Panc1 (cell line): ENCODE measurements at regions of chr12 and their contacts with region 1.

Region 1: DNA sequence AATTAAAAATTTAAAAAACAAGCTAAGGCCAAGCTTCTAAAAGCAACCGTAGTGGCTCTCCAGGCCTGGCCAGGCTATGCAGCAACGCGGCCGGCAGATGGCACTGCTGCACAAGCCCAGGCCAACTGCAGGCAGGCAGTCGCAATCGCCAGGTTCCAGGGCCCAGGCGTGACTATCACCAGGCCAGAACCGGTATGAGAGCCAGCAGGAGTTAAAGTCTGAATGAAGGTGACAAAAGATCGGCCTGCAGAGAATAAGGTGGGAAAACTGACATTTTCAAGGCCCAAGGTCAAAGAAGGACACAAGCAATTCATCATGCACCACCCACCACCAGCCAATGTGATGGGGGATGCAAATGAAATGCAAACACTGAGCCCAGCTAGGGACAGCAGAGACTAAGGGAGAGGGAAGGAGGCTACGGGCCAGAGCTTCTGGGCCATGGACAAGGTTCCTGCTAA is 43.6 kb upstream of the ANO2 start:
- DNase-seq: peak; percentile 42
- ATAC-seq: peak; percentile 97
- H3K4me3 ChIP-seq: no peak overlapping the region
- H3K27ac ChIP-seq: no peak overlapping the region
- H3K4me1 ChIP-seq: no peaks in the 10 kb centered on the region
- H3K27me3 ChIP-seq: no peaks in the 10 kb centered on the region; the same call in 1 of the 2 replicates
- CTCF ChIP-seq: peak; percentile 95

Region 2: DNA sequence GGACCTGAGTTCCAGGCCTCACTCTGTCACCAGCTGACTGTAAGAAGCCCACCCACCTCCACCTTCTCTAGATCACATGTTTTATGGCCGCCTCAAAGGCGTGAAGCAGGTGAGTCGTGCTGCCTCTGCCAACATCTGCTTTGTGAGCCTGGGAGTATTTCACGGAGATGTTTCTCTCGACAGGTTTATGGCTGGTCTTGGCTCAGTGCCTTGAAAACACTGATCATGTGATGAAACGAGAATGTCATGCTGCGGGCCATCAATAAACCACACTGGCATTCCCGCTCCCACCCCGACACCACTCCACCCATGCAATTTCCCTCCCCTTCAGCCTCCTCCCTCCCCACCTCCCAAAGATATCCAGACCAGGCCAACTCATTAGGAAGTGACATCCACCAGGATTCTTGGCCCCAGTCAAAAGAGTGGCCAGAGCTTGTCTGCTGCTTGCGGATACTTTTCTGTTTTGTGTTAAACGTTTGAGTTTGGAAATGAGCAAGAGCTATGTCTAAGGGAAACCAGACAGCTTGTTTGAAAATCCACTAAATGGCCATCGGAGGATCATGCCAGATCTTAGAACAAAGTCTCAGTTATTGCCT is 610.6 kb before region 1 on chr12:
- CTCF ChIA-PET with region 1: no interaction called
- POLR2A ChIA-PET with region 1: interaction called, 11 read pairs
- in situ Hi-C with region 1: no loop called
- intact Hi-C with region 1: no loop called
- DNase-seq: no peak
- ATAC-seq: no peak
- H3K4me3 ChIP-seq: no peak overlapping the region
- H3K27ac ChIP-seq: no peak overlapping the region
- H3K4me1 ChIP-seq: no peaks in the 10 kb centered on the region
- H3K27me3 ChIP-seq: no peaks in the 10 kb centered on the region
- CTCF ChIP-seq: no peak

Region 3: DNA sequence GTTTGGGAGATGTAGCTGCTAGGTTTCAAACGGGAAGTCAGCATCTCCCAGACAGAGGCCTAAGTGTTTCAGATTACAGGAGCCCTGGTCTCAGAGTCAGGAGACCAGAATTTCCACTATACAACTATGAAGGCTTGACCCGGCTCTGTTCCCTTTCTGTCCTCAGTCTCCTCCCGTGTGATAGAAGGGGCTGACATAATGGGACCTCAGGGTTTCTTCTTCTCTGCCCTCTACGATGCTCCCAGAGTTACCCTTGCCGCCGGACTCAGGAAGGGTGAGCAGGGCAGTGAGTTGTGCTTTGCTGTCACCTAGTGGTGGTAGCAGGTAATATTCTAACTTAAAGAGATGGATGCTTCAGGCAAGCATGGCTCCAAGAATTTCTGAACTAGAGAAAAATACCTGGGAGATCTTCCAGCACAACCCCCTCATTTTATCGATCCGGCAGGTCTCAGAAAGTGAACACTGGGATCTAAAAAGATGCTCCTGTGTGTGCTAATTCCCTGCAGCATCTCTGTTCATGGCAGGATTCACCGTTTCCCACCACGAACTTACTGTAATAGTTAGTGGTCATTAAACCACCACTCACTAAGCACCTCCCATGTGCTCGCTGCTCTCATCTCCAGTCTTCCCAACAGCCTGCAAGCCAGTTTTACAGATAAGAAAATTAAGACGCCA is 51.3 kb after region 1 on chr12:
- CTCF ChIA-PET with region 1: interaction called, 34 read pairs
- POLR2A ChIA-PET with region 1: no interaction called
- in situ Hi-C with region 1: no loop called
- intact Hi-C with region 1: loop called (anchors 1 kb)
- DNase-seq: peak; percentile 55
- ATAC-seq: peak; percentile 90
- H3K4me3 ChIP-seq: no peak overlapping the region
- H3K27ac ChIP-seq: no peak overlapping the region
- H3K4me1 ChIP-seq: no peaks in the 10 kb centered on the region
- H3K27me3 ChIP-seq: no peaks in the 10 kb centered on the region
- CTCF ChIP-seq: peak; percentile 88

Region 4: DNA sequence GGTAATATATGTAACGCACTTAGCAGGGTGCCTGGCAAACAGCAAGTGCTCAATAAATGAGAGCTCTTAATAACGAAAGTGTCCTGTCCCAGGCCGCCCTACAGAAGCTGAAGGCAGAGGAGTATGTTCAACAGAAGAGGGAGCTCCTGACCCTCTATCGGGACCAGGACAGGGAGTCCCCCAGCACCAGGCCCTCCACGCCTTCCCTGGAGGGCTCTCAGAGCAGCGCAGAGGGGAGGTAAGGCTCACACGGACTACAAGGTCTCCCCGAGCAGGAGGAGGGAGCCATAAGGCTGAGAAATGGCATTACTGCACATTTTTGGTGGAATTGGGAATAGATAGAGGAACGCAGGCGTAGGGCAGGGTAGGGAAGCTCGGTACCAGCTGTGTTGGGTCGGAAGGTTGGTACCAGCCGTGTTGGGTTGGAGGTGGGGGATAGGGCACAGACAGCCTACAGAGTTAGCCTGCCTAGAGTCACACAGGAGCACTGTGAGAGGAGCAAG is 337.7 kb after region 1 on chr12:
- CTCF ChIA-PET with region 1: interaction called, 10 read pairs
- POLR2A ChIA-PET with region 1: no interaction called
- in situ Hi-C with region 1: no loop called
- intact Hi-C with region 1: no loop called
- DNase-seq: no peak
- ATAC-seq: peak; percentile 68
- H3K4me3 ChIP-seq: no peak overlapping the region
- H3K27ac ChIP-seq: peak overlapping the region; percentile 42
- H3K4me1 ChIP-seq: peaks cover 55% of the 10 kb centered on the region
- H3K27me3 ChIP-seq: no peaks in the 10 kb centered on the region
- CTCF ChIP-seq: peak; percentile 73